Endothelial cell of umbilical vein (primary cell): ENCODE measurements at regions of chr15 and their contacts with region 1.

Region 1: DNA sequence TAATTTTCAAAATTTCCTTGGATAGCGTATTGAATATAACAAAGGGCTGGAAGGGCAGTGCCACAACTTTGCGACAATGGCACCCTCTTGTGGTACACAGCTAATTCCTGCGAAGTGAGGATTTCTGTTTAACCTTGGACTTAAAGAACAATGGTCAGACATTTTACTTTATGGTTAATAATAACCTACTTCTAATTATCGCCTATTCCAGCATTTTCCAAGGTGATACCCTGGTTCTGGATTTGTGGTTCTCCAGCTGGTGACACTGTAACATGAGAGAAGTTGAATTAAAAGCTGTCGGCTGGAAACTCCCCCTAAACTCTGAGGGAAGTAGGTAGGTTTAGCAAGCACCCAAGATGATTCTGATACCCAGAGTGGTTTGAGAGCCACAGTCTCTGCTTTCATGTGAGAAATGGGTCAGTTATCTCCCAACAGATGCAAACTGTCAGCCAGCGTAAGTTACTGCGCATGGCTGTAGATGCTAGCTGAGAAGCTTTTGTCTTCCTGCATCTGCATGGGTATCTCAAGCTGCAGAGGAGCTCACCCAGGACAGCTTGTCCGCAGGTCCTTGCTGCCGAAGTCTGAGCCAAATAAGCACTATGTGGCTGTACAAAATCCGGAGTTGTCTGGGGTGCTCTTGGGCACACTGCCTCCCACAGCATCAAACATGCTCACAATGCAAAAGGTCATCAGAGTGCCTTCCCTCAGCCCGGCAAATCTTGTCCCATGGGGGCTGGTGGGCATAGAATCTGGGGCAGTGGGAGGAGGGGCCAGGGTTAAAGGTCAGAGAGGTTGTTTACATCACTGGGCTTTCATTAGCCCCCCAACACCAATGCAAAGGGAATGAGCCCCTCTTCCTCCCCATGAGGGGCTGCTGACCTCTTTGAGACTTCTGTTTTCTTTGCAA is 6.6 kb upstream of the CHSY1 start:
- DNase-seq: peak; percentile 80
- H3K4me3 ChIP-seq: no peak overlapping the region
- H3K27ac ChIP-seq: no peak overlapping the region
- H3K4me1 ChIP-seq: peaks cover 11% of the 10 kb centered on the region
- H3K27me3 ChIP-seq: peaks cover 0 to 2% of the 10 kb centered on the region in 2 experiments
- CTCF ChIP-seq: peak; percentile 66 to 88
- POLR2A ChIP-seq: no peak

Region 2: DNA sequence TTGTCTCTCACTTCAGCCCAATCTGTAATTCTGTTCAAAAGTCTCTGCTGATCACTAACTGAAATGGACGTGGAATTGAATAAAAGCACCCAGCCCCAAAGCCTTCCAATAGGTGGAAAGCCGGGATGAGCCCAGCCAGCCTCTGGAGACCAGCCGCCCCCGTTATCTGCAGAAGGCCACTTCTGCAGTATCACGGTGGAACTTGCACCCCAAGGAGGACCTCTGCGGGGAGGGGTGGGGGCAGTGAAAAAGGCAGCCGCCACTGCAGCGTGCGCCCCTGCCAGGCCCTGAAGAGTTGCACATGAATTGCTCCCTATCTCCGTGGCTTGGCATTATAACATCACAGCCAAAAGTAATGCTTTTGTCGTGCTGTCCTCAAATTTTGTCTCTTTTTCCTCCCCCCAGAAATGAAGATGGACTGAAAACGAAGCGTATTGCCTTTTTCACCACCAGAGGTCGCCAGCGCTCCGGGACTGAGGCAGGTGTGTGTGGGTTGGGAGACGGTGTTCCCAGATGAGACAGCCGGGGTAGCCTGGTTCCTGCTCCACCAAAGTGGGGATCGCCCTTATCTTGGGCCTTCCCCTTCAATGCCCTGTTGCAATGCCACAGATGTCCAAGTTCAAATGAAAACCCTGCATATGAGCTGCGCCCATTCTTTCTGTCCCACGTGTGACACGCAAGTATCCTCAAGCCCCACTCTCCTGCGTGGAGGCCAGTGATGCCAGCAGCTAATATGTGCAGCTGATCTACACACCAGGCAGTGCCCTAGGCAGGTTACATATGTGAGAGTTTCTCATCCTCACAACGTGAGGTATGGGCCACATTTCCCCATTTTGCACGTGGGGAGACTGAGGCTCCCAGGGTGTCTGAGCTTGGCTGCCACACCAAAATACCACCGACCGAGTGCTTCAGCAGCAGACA is 243.3 kb before region 1 on chr15:
- CTCF ChIA-PET with region 1: interaction called, 68 read pairs
- POLR2A ChIA-PET with region 1: no interaction called
- dilution Hi-C with region 1: no loop called
- intact Hi-C with region 1: loop called (anchors 1 kb)
- DNase-seq: peak; percentile 59
- H3K4me3 ChIP-seq: no peak overlapping the region
- H3K27ac ChIP-seq: no peak overlapping the region
- H3K4me1 ChIP-seq: no peaks in the 10 kb centered on the region
- H3K27me3 ChIP-seq: no peaks in the 10 kb centered on the region
- CTCF ChIP-seq: peak; percentile 83 to 90
- POLR2A ChIP-seq: no peak

Region 3: DNA sequence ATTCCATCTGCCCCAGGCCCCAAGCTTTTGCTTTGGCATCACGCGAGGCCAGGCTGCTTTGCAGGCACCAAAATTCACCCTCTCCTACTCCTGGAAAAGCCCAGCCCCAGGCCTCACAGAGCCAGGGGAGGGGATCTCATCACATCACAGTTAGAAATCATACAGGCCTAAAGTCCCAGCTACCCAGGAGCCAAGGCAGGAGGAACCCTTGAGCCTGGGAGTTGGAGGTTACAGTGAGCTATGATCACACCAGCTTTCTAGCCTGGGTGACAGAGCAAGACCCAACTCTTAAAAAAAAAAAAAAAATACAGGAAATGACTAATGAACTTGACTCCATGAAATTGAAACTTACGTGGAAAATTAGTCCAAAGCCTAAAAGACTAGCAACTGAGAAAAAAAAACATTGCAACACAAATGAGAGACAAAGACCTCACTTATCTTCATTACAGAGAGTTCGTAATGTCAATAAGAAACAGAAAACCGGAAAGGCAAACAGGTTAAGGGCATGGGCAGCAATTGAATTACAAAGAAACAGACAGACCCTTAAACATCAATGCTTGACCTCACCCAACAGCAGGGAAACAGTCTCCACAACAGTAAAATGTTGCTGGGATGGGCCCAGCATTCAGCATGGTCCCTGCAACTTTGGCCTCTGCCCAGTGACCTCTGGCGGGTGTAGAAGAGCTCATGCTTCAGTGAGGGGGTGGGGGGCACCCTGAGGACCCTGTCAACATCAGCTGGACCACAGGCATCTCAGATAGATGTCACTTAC is 187.8 kb before region 1 on chr15:
- CTCF ChIA-PET with region 1: interaction called, 7 read pairs
- POLR2A ChIA-PET with region 1: no interaction called
- dilution Hi-C with region 1: no loop called
- intact Hi-C with region 1: loop called (anchors 5 kb)
- DNase-seq: peak; percentile 87
- H3K4me3 ChIP-seq: no peak overlapping the region
- H3K27ac ChIP-seq: peak overlapping the region; percentile 71
- H3K4me1 ChIP-seq: peaks cover 10% of the 10 kb centered on the region
- H3K27me3 ChIP-seq: no peaks in the 10 kb centered on the region
- CTCF ChIP-seq: no peak
- POLR2A ChIP-seq: no peak

Region 4: GRCh38 chr15:101121511-101122090 is 136.9 kb before region 1 on chr15:
- CTCF ChIA-PET with region 1: interaction called, 12 read pairs
- POLR2A ChIA-PET with region 1: interaction called, 3 read pairs
- dilution Hi-C with region 1: no loop called
- intact Hi-C with region 1: loop called (anchors 1 kb)
- DNase-seq: peak; percentile 78
- H3K4me3 ChIP-seq: no peak overlapping the region
- H3K27ac ChIP-seq: no peak overlapping the region
- H3K4me1 ChIP-seq: peaks cover 3% of the 10 kb centered on the region
- H3K27me3 ChIP-seq: no peaks in the 10 kb centered on the region
- CTCF ChIP-seq: peak; percentile 28 to 66
- POLR2A ChIP-seq: no peak

Region 5: DNA sequence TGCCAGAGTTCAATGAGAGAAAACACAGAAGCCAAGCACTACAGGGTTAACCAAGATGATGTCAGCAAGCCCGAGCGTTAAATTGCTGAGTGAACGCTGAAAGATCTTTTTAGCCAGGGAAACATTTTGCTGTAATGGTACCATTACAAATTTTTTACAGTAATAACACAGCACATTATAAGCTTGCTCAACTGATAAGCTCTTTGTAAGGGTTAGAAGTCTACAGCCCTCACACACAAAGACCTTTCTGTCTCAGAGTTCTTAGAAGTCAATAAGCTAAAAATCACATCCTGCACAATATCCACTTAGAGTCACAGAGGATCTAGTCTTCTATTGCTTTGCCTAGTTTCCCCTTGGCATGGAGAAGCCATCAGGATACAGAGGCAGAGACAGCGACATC is 36.6 kb before region 1 on chr15:
- CTCF ChIA-PET with region 1: no interaction called
- POLR2A ChIA-PET with region 1: no interaction called
- dilution Hi-C with region 1: no loop called
- intact Hi-C with region 1: no loop called
- DNase-seq: no peak
- H3K4me3 ChIP-seq: no peak overlapping the region
- H3K27ac ChIP-seq: no peak overlapping the region
- H3K4me1 ChIP-seq: peaks cover 9% of the 10 kb centered on the region
- H3K27me3 ChIP-seq: no peaks in the 10 kb centered on the region
- CTCF ChIP-seq: no peak
- POLR2A ChIP-seq: no peak